Activated CD4-positive, alpha-beta T cell treated with anti-CD3 and anti-CD28 coated beads, Interleukin-2, amount 10 ng/mL, durations not matched to agents 24 days and 14 days (primary cell): ENCODE measurements at regions of chr11 and their contacts with region 1.

Region 1: GRCh38 chr11:94325681-94326080 is 21.3 kb downstream of the IZUMO1R start:
- DNase-seq: peak; percentile 89
- H3K4me3 Mint-ChIP-seq: no peak overlapping the region
- H3K27ac Mint-ChIP-seq: no peak overlapping the region
- H3K4me1 Mint-ChIP-seq: no peaks in the 10 kb centered on the region
- H3K27me3 Mint-ChIP-seq: peaks cover 5% of the 10 kb centered on the region

Region 2: GRCh38 chr11:93921695-93922468 is 403.8 kb before region 1 on chr11:
- intact Hi-C with region 1: loop called (anchors 10 kb)
- DNase-seq: peak; percentile 79
- H3K4me3 Mint-ChIP-seq: no peak overlapping the region
- H3K27ac Mint-ChIP-seq: no peak overlapping the region
- H3K4me1 Mint-ChIP-seq: no peaks in the 10 kb centered on the region
- H3K27me3 Mint-ChIP-seq: peaks cover 10% of the 10 kb centered on the region

Region 3: GRCh38 chr11:94254214-94254613 is 71.5 kb before region 1 on chr11:
- intact Hi-C with region 1: no loop called
- DNase-seq: no peak
- H3K4me3 Mint-ChIP-seq: no peak overlapping the region
- H3K27ac Mint-ChIP-seq: no peak overlapping the region
- H3K4me1 Mint-ChIP-seq: no peaks in the 10 kb centered on the region
- H3K27me3 Mint-ChIP-seq: no peaks in the 10 kb centered on the region